Right lobe of liver (tissue), 6 donors: ENCODE measurements at regions of chr3 and their contacts with region 1.

Region 1: GRCh38 chr3:17412950-17413530 is 329.4 kb downstream of the TBC1D5 start:
- DNase-seq: no peak
- ATAC-seq: peak; percentile 85 to 93 (median 89)
- H3K4me3 ChIP-seq: no peak overlapping the region
- H3K27ac ChIP-seq: no peak overlapping the region
- H3K4me1 ChIP-seq: no peaks in the 10 kb centered on the region
- H3K27me3 ChIP-seq: no peaks in the 10 kb centered on the region
- CTCF ChIP-seq: peak; percentile 77 to 89 (median 80)
- POLR2A ChIP-seq: no peak

Region 2: GRCh38 chr3:17258823-17259436 is 154.1 kb before region 1 on chr3:
- intact Hi-C with region 1: loop called (anchors 5 to 10 kb)
- DNase-seq: no peak
- ATAC-seq: peak; percentile 33 to 58 (median 52)
- H3K4me3 ChIP-seq: no peak overlapping the region
- H3K27ac ChIP-seq: no peak overlapping the region
- H3K4me1 ChIP-seq: peaks cover 0 to 8% (median 0%) of the 10 kb centered on the region in 4 donors
- H3K27me3 ChIP-seq: no peaks in the 10 kb centered on the region
- CTCF ChIP-seq: peak; percentile 71 to 82 (median 74)
- POLR2A ChIP-seq: no peak

Region 3: GRCh38 chr3:17579289-17580031 is 166.4 kb after region 1 on chr3:
- intact Hi-C with region 1: no loop called
- DNase-seq: no peak
- ATAC-seq: no peak
- H3K4me3 ChIP-seq: no peak overlapping the region
- H3K27ac ChIP-seq: no peak overlapping the region
- H3K4me1 ChIP-seq: no peaks in the 10 kb centered on the region
- H3K27me3 ChIP-seq: no peaks in the 10 kb centered on the region
- CTCF ChIP-seq: no peak
- POLR2A ChIP-seq: no peak